Heart right ventricle (tissue), 16 donors: ENCODE measurements at regions of chr4 and their contacts with region 1.

Region 1: DNA sequence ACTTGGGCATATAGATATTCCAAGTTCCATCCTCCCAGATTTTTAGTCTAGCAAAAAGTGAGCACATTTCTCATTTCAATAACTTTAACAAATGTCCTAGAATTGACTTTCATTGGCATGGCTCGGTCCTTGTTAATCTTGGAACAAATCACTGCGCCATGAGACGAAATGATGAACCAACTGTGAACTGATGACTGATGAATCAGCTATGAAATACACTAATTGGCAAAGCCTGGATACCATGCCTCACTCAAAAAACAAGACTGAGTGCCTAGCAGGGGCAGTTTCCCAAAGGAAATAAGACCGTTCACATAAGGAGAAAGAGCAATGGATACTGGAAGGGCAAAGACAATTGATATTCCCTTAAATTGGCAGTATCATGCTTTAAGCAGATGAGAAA is 248.6 kb upstream of the VEGFC start:
- DNase-seq: no peak
- ATAC-seq: no peak
- H3K4me3 ChIP-seq: no peak overlapping the region
- H3K27ac ChIP-seq: no peak overlapping the region
- H3K4me1 ChIP-seq: no peaks in the 10 kb centered on the region
- H3K27me3 ChIP-seq: no peaks in the 10 kb centered on the region
- CTCF ChIP-seq: no peak

Region 2: GRCh38 chr4:176563591-176563990 is 477.8 kb before region 1 on chr4:
- intact Hi-C with region 1: loop called in 8 of 10 experiments (anchors 2 to 10 kb)
- DNase-seq: no peak
- ATAC-seq: no peak
- H3K4me3 ChIP-seq: no peak overlapping the region
- H3K27ac ChIP-seq: no peak overlapping the region
- H3K4me1 ChIP-seq: no peaks in the 10 kb centered on the region
- H3K27me3 ChIP-seq: no peaks in the 10 kb centered on the region
- CTCF ChIP-seq: peak in 6 of 9 donors; percentile 21 to 49 (median 42)